ENCODE measurements at regions of chr1 and their contacts with region 1.

Region 1: GRCh38 chr1:203504397-203505250 is 10.7 kb downstream of the OPTC start:
- DNase-seq: peak; percentile 72 to 91
- ATAC-seq: peak; percentile 87

Region 2: DNA sequence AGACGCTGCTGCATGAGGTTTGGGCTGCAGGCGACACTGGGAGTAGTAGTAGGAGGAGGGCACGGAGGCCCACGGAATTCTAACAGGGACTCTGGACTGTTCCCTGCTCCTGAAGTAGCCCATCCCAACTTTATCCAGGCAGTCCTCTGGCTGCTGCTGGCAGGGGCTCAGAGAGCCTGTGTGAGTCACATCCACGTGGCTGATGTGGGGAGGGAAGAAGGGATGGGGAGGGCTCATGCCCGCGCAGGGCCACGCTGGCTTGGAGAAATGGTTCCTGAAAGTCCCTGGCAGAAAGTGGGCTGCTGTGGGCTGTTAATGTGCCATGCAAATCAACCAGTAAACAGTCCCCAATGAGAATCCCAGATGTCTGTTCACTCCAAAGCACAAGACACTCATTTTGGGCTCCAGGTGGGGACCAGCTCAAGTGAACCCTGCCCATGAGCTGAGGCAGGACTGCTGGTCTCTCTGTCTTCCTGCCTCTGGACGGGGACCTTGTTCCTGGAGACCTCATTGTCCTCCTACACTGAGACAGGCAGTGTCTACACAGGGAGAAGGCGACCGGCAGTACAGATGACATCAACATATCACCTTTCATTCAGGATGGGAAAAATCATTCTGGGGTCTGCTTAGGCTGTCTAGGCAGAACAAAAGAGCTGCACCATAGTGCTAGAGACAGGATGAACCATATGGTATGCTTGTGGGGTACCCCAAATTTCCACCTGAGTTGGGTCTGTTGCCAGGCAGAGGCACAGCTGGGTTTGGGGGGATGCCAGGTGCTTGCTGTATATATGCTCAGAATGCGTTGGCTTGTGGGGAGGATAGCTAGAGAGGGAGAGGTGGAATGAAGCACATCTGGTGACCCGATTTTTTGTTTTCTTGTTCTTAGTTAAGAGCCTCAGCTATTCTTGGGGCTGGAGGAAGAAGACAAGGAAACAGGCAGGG is 95.9 kb before region 1 on chr1:
- intact Hi-C with region 1: no loop called
- DNase-seq: peak; percentile 73 to 88
- ATAC-seq: peak; percentile 86

Region 3: DNA sequence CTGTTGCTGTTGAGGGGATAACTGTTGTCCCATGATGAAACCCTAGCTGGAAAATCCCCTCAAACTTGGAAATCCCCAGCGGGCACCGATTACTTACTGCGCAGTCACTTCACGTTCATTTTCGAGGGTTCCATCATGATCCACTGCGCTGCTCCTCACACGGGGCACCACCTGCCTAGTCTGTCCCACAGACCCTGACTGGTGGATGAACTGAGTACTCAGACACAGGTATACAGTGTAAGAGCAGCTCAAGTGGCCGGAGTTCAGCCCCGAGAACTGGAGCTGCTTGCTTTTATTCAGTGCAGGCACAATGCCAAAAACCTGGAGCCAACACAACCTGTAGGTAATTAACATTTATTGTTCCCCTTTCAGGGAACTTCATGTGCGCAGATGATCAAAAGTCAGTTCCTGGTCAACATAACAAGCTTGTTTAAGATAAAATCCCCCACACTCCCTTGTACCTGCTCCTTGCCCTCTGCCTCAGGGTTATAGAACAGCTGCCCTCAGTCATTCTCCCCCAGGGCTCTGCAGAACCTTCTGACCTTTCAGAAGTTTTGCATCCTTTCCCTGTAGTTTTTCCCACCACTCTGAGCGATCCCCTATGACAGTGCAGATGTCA is 75.5 kb before region 1 on chr1:
- intact Hi-C with region 1: no loop called
- DNase-seq: peak; percentile 75 to 79
- ATAC-seq: peak; percentile 65

Region 4: GRCh38 chr1:203702130-203702577 is 197.5 kb after region 1 on chr1:
- intact Hi-C with region 1: loop called (anchors 2 to 5 kb)
- DNase-seq: peak in 1 of 2 donors; percentile 70
- ATAC-seq: peak; percentile 68

Measured in left colon (tissue), 2 donors.